Heart right ventricle (tissue), 16 donors: ENCODE measurements at regions of chr3 and their contacts with region 1.

Region 1: DNA sequence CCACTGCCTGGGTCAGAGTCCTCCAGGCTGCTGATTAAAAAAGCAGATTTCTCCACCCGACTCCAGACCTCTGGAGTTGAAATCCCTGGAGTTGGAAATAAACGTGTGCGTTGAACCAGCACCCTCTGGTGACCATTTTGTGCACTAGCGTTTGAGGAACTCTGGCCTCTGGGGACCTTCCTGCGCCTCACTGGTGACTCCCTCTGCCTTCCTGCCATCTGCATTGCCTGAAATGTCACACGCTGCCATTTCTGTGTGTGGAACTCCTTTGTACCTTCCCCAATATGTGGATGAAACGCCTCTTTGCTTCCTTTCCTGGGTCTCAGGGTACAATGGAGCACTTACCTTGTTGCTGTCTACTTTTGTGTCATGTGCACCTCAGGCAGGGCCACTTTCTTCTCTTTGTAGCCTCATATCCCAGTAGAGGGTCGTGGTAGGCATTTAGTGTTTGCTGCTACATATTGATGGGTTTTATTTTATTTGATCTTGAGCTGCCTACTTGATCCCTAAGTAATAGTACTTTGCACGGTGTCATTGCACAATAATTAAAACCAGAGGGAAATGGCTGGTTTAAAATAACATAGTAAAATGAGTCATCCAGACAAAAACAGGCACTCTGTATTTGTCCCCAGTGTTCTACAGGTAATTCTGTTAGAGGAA is 56.8 kb downstream of the GPR171 start:
- DNase-seq: peak; percentile 43 to 71
- ATAC-seq: peak; percentile 85 to 97 (median 94)
- H3K4me3 ChIP-seq: peak overlapping the region in 1 of 10 donors; percentile 5
- H3K27ac ChIP-seq: no peak overlapping the region
- H3K4me1 ChIP-seq: peaks cover 0 to 14% (median 9%) of the 10 kb centered on the region in 9 donors
- H3K27me3 ChIP-seq: no peaks in the 10 kb centered on the region
- CTCF ChIP-seq: peak; percentile 81 to 96 (median 88)

Region 2: DNA sequence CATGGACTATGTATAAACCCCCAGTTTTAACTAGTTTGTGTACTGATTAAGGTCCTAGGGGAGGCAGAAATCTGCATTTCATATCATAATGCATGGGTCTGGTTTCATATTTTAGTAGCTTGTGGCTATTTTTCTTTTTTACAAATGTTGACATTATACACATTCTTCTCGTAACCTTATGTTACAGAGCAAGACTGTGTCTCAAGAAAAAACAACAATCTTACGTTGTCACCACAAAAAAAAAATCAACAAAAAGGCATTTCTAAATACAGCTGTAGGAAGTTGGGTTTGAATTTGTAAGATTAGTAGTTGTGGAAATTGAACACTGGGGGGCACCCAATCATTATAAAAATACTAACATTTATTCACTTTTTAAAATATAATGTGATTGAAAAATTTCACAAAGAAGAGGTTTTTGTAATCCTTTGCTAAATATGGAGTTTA is 617.8 kb before region 1 on chr3:
- intact Hi-C with region 1: loop called in 2 of 10 experiments (anchors 5 to 10 kb)
- DNase-seq: no peak
- ATAC-seq: no peak
- H3K4me3 ChIP-seq: no peak overlapping the region
- H3K27ac ChIP-seq: no peak overlapping the region
- H3K4me1 ChIP-seq: no peaks in the 10 kb centered on the region
- H3K27me3 ChIP-seq: no peaks in the 10 kb centered on the region
- CTCF ChIP-seq: peak in 8 of 9 donors; percentile 6 to 52 (median 41)

Region 3: GRCh38 chr3:150787741-150788370 is 358.3 kb before region 1 on chr3:
- intact Hi-C with region 1: loop called (anchors 1 to 10 kb)
- DNase-seq: peak; percentile 77 to 83
- ATAC-seq: peak in 7 of 8 donors; percentile 81 to 91 (median 84)
- H3K4me3 ChIP-seq: no peak overlapping the region
- H3K27ac ChIP-seq: no peak overlapping the region
- H3K4me1 ChIP-seq: peaks cover 0 to 7% (median 0%) of the 10 kb centered on the region in 9 donors
- H3K27me3 ChIP-seq: peaks cover 0 to 14% (median 0%) of the 10 kb centered on the region in 7 donors
- CTCF ChIP-seq: peak; percentile 84 to 96 (median 91)

Region 4: DNA sequence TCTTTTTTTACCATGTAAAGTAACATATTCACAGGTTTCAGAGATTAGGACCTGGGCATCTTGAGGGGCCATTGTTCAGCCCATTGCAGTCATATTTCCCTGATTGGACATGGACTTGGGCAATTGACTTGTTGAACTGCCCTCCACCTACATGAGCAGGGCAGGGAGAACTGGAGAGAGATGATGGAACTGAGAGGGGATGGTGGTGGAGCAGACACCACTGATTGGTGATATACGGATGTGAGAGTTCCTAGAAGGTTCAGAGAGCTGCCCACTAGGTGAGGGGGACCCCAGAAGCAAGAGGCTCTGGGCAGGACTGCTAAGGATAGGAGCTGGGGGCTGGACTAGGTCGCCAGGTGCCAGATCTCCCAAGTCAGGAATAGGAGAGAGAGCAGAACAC is 345.5 kb before region 1 on chr3:
- intact Hi-C with region 1: no loop called
- DNase-seq: no peak
- ATAC-seq: no peak
- H3K4me3 ChIP-seq: no peak overlapping the region
- H3K27ac ChIP-seq: no peak overlapping the region
- H3K4me1 ChIP-seq: peaks cover 0 to 5% (median 0%) of the 10 kb centered on the region in 9 donors
- H3K27me3 ChIP-seq: peaks cover 0 to 12% (median 6%) of the 10 kb centered on the region in 7 donors
- CTCF ChIP-seq: no peak

Region 5: GRCh38 chr3:150870396-150870795 is 275.8 kb before region 1 on chr3:
- intact Hi-C with region 1: loop called in 2 of 10 experiments (anchors 10 kb)
- DNase-seq: no peak
- ATAC-seq: peak in 4 of 8 donors; percentile 48 to 85 (median 75)
- H3K4me3 ChIP-seq: no peak overlapping the region
- H3K27ac ChIP-seq: peak overlapping the region in 4 of 10 donors; percentile 32 to 54 (median 46)
- H3K4me1 ChIP-seq: peaks cover 0 to 15% (median 0%) of the 10 kb centered on the region in 9 donors
- H3K27me3 ChIP-seq: no peaks in the 10 kb centered on the region
- CTCF ChIP-seq: no peak

Region 6: GRCh38 chr3:150933473-150933995 is 212.7 kb before region 1 on chr3:
- intact Hi-C with region 1: loop called in 5 of 10 experiments (anchors 5 to 10 kb)
- DNase-seq: no peak
- ATAC-seq: no peak
- H3K4me3 ChIP-seq: no peak overlapping the region
- H3K27ac ChIP-seq: no peak overlapping the region
- H3K4me1 ChIP-seq: no peaks in the 10 kb centered on the region
- H3K27me3 ChIP-seq: peaks cover 0 to 8% (median 0%) of the 10 kb centered on the region in 7 donors
- CTCF ChIP-seq: no peak

Region 7: GRCh38 chr3:151305101-151305750 is 159.0 kb after region 1 on chr3:
- intact Hi-C with region 1: no loop called
- DNase-seq: no peak
- ATAC-seq: peak in 2 of 8 donors; percentile 63 to 72
- H3K4me3 ChIP-seq: no peak overlapping the region
- H3K27ac ChIP-seq: no peak overlapping the region
- H3K4me1 ChIP-seq: peaks cover 0 to 13% (median 0%) of the 10 kb centered on the region in 9 donors
- H3K27me3 ChIP-seq: no peaks in the 10 kb centered on the region
- CTCF ChIP-seq: no peak